HepG2 (cell line): ENCODE measurements at regions of chr15 and their contacts with region 1.

Region 1: DNA sequence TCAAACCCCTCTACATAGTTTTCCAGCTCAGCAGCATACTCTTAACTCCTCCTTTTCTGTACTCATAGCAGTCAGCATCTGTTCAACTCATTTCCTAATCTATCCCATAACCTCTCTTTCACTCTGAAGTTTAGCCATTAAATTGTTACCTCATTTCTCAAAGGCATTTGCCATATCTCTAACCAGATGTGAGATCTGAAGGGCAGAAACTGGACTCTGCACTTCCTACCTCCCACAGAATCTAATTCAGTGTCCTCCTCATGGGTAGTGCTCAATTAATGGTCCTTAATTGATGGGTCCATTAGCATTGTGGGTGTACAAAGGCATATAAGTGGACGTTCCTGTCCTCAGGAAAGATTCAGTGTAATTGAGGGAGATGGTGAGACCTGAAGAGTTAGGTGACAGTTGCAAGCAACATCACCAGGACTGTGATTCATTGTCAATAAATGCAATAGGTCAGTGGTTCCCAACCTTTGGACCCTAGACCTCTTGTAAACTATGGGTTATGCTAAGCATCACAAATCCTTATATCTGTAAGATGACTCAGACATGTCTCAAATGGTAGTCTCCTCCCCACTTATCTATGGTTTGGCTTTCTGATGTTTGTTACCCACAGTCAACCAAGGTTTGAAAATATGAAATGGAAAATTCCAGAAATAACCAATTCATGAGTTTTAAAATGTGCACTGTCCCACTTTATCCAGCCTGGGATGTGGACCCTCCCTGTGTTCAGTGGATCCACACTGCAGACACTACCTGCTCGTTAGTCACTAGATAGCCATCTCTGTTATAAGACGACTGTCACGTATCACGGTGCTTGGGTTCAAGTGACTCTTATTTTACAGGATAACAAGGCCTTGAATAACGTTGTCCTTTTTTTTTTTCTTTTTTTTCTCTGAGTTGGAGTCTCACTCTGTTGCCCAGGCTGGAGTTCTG is 25.0 kb upstream of the UACA start:
- DNase-seq: peak; percentile 91
- ATAC-seq: peak; percentile 79
- H3K4me3 ChIP-seq: peak overlapping the region in 1 of 3 experiments; percentile 3; a peak in 1 of 6 replicates
- H3K27ac ChIP-seq: peak overlapping the region; percentile 40
- H3K4me1 ChIP-seq: peaks cover 52% of the 10 kb centered on the region
- H3K27me3 ChIP-seq: no peaks in the 10 kb centered on the region
- CTCF ChIP-seq: no peak
- EP300 ChIP-seq: peak; percentile 34 to 81; a peak in 3 of 4 replicates
- POLR2A ChIP-seq: no peak
- RAD21 ChIP-seq: no peak

Region 2: DNA sequence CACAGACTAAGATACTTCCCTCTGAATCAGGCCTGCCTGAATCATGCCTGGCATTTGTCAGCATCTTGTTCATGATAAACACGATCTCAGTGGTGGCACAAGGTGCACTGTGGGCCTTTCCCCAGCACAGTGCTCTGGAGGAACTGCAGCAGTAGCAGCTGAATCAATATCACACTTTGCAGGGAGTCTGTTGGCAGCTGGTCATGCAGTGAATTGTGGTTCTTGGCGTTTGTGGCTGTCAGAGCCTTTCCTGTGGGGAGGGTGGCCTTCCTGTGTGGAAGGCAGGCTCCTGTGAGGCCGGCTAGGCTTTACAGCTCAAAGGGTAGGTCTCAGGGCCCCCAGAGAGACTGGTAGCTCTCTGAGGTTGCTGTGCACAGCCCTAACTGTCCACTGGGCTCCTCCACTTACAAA is 636.3 kb before region 1 on chr15:
- CTCF ChIA-PET with region 1: no interaction called
- POLR2A ChIA-PET with region 1: no interaction called
- in situ Hi-C with region 1: no loop called
- intact Hi-C with region 1: loop called (anchors 5 kb)
- DNase-seq: no peak
- ATAC-seq: peak; percentile 52; the same call in 2 of the 3 replicates
- H3K4me3 ChIP-seq: no peak overlapping the region
- H3K27ac ChIP-seq: no peak overlapping the region
- H3K4me1 ChIP-seq: 0 out of 2 replicates have a peak, but pooled peaks cover 8% of the 10 kb centered on the region
- H3K27me3 ChIP-seq: peaks cover 9 to 85% of the 10 kb centered on the region in 2 experiments; a peak in 4 of 5 replicates
- CTCF ChIP-seq: no peak
- EP300 ChIP-seq: no peak
- POLR2A ChIP-seq: no peak
- RAD21 ChIP-seq: no peak

Region 3: GRCh38 chr15:71011503-71012155 is 223.2 kb after region 1 on chr15:
- CTCF ChIA-PET with region 1: no interaction called
- POLR2A ChIA-PET with region 1: no interaction called
- in situ Hi-C with region 1: no loop called
- intact Hi-C with region 1: no loop called
- DNase-seq: peak; percentile 3
- ATAC-seq: no peak
- H3K4me3 ChIP-seq: no peak overlapping the region
- H3K27ac ChIP-seq: no peak overlapping the region
- H3K4me1 ChIP-seq: no peaks in the 10 kb centered on the region
- H3K27me3 ChIP-seq: no peaks in the 10 kb centered on the region
- CTCF ChIP-seq: peak; percentile 32
- EP300 ChIP-seq: no peak
- POLR2A ChIP-seq: no peak
- RAD21 ChIP-seq: no peak